Gastrocnemius medialis (tissue), 4 donors: ENCODE measurements at regions of chr20 and their contacts with region 1.

Region 1: GRCh38 chr20:20860078-20860806 is 147.8 kb upstream of the RALGAPA2 start:
- DNase-seq: peak; percentile 47 to 58
- ATAC-seq: peak; percentile 65 to 75
- H3K4me3 ChIP-seq: no peak overlapping the region
- H3K27ac ChIP-seq: no peak overlapping the region
- H3K4me1 ChIP-seq: no peaks in the 10 kb centered on the region
- H3K27me3 ChIP-seq: peaks cover 0 to 2% (median 0%) of the 10 kb centered on the region in 3 donors
- CTCF ChIP-seq: peak; percentile 75 to 94 (median 85)
- POLR2A ChIP-seq: no peak

Region 2: GRCh38 chr20:21048841-21049273 is 188.6 kb after region 1 on chr20:
- in situ Hi-C with region 1: loop called in 1 of 4 experiments (anchors 25 kb)
- intact Hi-C with region 1: no loop called
- DNase-seq: no peak
- ATAC-seq: peak in 1 of 2 donors; percentile 51
- H3K4me3 ChIP-seq: no peak overlapping the region
- H3K27ac ChIP-seq: no peak overlapping the region
- H3K4me1 ChIP-seq: no peaks in the 10 kb centered on the region
- H3K27me3 ChIP-seq: no peaks in the 10 kb centered on the region
- CTCF ChIP-seq: peak in 3 of 5 experiments; percentile 20 to 72 (median 46)
- POLR2A ChIP-seq: no peak

Region 3: DNA sequence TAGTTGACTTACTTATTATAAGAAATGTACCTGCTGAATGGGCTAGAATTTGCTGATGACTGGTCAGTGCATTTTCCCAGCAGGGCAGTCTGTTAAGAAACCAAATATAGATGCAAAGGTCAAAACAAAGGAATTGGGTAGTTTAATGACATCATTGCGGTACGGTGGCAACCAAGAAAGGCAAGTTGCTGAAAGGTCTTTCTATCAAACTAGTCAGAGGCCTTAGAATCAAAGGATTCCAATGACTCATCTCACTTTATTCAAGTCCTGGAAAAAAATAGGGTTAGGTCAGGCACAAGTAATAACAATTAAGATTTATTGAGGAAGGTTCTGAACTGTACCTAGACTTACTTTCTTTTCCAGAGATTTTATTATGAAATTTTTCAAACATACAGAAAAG is 342.0 kb after region 1 on chr20:
- in situ Hi-C with region 1: loop called in 1 of 4 experiments (anchors 25 kb)
- intact Hi-C with region 1: no loop called
- DNase-seq: no peak
- ATAC-seq: no peak
- H3K4me3 ChIP-seq: no peak overlapping the region
- H3K27ac ChIP-seq: no peak overlapping the region
- H3K4me1 ChIP-seq: peaks cover 0 to 3% of the 10 kb centered on the region in 2 donors
- H3K27me3 ChIP-seq: no peaks in the 10 kb centered on the region
- CTCF ChIP-seq: no peak
- POLR2A ChIP-seq: no peak

Region 4: DNA sequence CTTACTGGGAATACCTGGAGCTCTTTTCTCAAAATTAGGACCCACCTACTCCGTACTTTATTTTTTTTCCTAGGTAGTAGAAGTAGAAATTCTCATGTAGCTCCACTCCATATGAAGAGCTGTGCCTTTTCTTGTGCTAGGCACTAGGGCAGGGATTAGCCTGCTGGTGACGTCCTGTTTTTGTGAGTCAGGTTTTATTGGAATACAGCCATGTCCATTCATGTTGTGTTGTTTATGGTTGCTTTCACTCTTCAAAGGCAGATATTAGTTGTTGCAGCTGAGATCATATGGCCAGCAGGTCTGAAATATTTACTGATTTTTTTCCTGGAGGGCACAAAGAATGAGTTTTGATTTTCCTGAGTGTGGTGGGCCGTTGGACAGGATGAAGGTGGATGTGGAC is 463.4 kb after region 1 on chr20:
- in situ Hi-C with region 1: loop called in 1 of 4 experiments (anchors 25 kb)
- intact Hi-C with region 1: no loop called
- DNase-seq: no peak
- ATAC-seq: peak in 1 of 2 donors; percentile 75
- H3K4me3 ChIP-seq: no peak overlapping the region
- H3K27ac ChIP-seq: peak overlapping the region in 3 of 4 donors; percentile 2 to 24 (median 21)
- H3K4me1 ChIP-seq: peaks cover 14 to 39% of the 10 kb centered on the region in 2 donors
- H3K27me3 ChIP-seq: no peaks in the 10 kb centered on the region
- CTCF ChIP-seq: no peak
- POLR2A ChIP-seq: no peak

Region 5: DNA sequence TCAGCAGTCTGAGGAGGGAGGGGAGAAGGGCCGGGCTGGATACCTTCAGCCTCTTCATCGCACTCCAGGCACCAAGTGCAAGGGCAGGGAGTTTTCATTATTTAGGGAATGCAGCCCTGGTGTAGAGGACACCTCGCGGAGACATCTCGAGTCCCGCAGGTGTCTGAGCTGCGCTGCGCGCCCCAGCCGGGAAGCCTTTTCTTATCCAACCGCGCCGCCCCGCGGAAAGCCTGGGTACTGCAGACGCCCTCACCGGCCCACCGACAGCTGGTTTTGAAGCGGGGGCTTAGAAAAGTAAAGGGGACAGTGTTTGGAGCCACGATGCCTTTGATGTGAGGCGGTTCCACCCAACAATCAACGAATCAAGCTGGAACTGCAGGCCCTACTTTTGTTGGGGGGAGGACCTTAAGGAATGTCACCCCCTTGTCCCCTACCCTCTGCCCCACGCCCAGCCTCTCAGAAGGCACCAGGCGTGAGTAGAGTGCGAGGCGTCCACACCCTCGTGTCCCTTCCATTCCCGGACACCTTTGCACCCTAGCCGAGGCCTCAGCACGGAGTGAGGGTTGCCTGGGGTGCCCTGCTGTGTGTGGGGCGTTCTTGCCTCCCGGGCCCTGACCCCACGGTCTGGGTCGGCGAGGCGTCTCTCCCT is 645.0 kb after region 1 on chr20:
- in situ Hi-C with region 1: loop called (anchors 10 kb)
- intact Hi-C with region 1: loop called (anchors 5 kb)
- DNase-seq: peak; percentile 20 to 32
- ATAC-seq: peak in 1 of 2 donors; percentile 56
- H3K4me3 ChIP-seq: peak overlapping the region in 3 of 4 donors; percentile 27 to 51 (median 40)
- H3K27ac ChIP-seq: no peak overlapping the region
- H3K4me1 ChIP-seq: peaks cover 13 to 18% of the 10 kb centered on the region in 2 donors
- H3K27me3 ChIP-seq: peaks cover 76 to 93% (median 81%) of the 10 kb centered on the region in 3 donors
- CTCF ChIP-seq: peak; percentile 83 to 97 (median 92)
- POLR2A ChIP-seq: no peak